Heart right ventricle (tissue), 16 donors: ENCODE measurements at regions of chr1 and their contacts with region 1.

Region 1: GRCh38 chr1:54413295-54413694 is 7.1 kb upstream of the SSBP3 start:
- DNase-seq: peak; percentile 36 to 68
- ATAC-seq: peak; percentile 56 to 91 (median 85)
- H3K4me3 ChIP-seq: peak overlapping the region in 2 of 10 donors; percentile 2 to 6
- H3K27ac ChIP-seq: peak overlapping the region in 9 of 10 donors; percentile 2 to 67 (median 31)
- H3K4me1 ChIP-seq: peaks cover 0 to 27% (median 22%) of the 10 kb centered on the region in 9 donors
- H3K27me3 ChIP-seq: no peaks in the 10 kb centered on the region
- CTCF ChIP-seq: no peak

Region 2: DNA sequence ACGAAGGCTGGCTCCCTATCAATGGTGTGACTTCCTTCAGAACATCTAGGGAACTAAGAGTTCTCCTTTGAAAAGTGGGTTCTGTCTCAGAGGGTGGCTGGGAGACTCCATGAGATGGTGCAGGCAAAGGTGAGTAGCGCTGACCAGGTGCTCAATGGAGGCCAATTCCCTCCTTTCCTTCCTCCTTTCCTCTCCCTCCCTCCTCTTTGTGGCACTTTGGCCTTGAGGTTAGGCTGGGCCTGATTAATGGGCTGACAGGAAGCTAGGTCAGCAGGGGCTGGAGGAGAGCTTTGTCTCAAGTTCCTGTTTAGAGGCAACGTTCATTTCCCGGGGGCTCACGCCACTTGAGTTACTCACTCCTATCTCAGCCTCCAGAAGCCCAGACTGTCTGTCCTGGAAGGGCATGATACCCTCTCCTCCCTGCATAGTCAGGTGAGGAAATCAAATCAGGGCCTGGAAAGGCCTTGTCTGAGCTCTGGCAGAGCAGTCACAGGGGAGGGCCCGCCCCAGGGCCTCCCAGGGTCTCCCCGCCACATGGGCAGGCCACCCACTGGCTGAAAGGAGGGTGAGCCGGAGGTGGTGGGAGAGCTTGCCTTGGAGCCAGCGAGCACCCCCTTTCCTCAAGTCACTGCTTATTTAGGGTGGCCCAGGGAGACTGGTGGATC is 51.3 kb after region 1 on chr1:
- intact Hi-C with region 1: no loop called
- DNase-seq: no peak
- ATAC-seq: peak in 3 of 8 donors; percentile 16 to 42 (median 20)
- H3K4me3 ChIP-seq: no peak overlapping the region
- H3K27ac ChIP-seq: peak overlapping the region in 1 of 10 donors; percentile 59
- H3K4me1 ChIP-seq: peaks cover 0 to 33% (median 22%) of the 10 kb centered on the region in 9 donors
- H3K27me3 ChIP-seq: no peaks in the 10 kb centered on the region
- CTCF ChIP-seq: no peak

Region 3: DNA sequence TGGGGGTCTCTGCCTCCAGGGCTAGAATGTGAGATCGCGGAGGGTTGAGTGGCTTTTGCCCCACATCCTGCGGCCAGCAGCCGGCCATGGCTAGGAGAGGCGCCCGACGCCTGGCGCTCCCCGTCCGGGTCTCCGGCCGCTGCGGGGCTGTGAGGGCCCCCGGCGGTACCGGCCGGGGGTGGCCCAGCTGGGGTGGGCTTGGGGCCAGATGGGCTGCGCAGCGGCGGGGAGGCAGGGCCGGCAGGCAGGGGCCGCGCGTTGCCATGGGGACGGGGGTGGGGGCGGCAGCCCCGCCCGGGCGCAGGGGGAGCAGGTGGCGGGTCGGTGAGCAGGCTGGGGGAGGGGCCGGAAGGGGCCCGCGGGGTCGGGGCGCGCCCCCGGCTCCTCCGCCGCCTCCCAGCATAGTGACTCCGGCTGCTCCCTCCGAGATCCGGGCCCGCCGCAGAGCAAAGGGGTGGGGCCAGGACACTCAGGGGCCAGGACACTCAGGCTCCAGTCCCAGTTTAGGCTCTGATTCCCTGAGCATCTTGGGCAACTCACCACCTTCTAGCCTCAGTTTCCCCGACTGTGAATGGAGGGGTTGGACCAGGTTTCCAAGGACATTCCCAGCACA is 61.5 kb after region 1 on chr1:
- intact Hi-C with region 1: loop called in 1 of 10 experiments (anchors 5 kb)
- DNase-seq: peak; percentile 35 to 40
- ATAC-seq: peak; percentile 23 to 75 (median 65)
- H3K4me3 ChIP-seq: peak overlapping the region in 9 of 10 donors; percentile 22 to 50 (median 39)
- H3K27ac ChIP-seq: no peak overlapping the region
- H3K4me1 ChIP-seq: peaks cover 3 to 28% (median 8%) of the 10 kb centered on the region in 9 donors
- H3K27me3 ChIP-seq: peaks cover 0 to 26% (median 10%) of the 10 kb centered on the region in 7 donors
- CTCF ChIP-seq: no peak

Region 4: DNA sequence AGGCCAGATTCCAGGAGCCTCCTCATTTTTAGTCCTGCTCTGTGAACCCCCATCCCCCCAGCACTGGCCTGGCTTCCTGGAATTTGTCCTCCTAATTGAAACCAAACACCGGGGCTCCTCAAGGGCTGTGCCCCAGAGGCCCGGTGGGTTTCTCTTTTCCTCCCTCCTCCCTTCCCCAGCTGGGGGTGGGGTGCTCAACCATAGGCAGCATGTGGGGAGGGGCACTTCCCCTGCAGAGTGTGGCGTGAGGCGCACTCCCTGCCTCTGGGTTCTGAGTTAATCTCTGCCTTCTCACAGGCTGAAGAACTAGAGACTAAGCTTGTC is 67.2 kb after region 1 on chr1:
- intact Hi-C with region 1: loop called in 2 of 10 experiments (anchors 1 to 5 kb)
- DNase-seq: no peak
- ATAC-seq: no peak
- H3K4me3 ChIP-seq: no peak overlapping the region
- H3K27ac ChIP-seq: peak overlapping the region in 1 of 10 donors; percentile 20
- H3K4me1 ChIP-seq: peaks cover 0 to 41% (median 2%) of the 10 kb centered on the region in 9 donors
- H3K27me3 ChIP-seq: peaks cover 0 to 4% (median 0%) of the 10 kb centered on the region in 7 donors
- CTCF ChIP-seq: no peak

Region 5: DNA sequence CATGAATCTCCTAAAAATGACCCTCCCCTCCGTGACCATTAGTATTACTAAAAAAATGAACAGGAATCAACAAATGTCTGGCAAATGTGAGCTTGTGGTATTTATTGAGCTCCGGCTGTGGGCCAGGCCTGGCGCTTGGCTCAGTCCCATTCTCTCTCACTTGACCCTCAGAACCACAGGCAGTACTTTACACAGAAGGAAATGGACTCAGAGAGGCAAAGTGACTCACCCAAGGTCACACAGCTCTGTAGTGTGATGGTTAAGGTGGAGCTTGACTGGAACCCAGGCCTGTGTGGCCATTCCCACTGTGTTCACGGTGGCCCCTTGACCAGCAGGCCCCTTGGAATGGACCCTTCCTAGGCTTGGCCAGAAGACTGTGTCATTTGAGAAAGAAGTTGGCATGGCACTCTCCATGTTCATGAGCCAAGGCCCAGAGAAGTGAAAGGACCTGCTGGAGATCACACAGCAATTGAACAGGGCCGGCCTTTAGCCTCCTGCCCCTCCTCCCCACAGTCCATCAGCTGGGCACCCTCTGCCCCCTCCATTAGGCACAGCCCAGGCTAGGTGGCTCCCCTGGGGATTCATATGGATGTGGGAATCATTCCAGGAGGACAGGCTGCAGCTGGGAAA is 177.9 kb after region 1 on chr1:
- intact Hi-C with region 1: no loop called
- DNase-seq: no peak
- ATAC-seq: no peak
- H3K4me3 ChIP-seq: no peak overlapping the region
- H3K27ac ChIP-seq: peak overlapping the region in 5 of 10 donors; percentile 33 to 68 (median 46)
- H3K4me1 ChIP-seq: peaks cover 0 to 45% (median 8%) of the 10 kb centered on the region in 9 donors
- H3K27me3 ChIP-seq: no peaks in the 10 kb centered on the region
- CTCF ChIP-seq: no peak